ENCODE measurements at regions of chr19 and their contacts with region 1.

Region 1: DNA sequence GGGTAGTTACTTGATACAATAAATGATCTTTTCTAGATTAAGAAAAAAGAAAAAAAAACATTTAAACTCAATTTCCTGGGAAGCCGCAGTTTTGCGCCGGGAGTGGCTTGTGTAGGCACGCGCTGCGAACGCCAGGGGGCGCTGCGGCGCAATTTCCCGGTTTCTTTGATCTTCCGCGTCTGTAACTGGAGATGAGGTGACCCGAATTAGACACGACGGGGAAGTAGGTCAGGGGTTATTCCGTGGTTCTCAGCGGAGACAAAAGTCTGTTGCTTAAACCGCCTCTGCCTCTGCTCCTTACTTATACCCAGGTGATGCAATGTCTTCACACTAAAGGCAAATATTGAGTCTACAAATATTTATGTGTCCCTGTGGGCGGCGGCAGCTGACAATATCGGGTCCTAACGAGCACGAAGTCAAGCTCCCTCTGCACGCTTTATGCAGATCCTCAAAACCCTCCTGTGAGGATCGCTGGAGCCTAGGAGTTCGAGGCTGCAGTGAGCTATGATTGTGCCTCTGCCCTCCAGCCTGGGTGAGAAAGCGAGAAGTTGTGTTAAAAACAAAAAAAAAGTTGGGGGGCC is 15.2 kb downstream of the STXBP2 start:
- DNase-seq: peak; percentile 91
- ATAC-seq: peak; percentile 90
- H3K4me3 Mint-ChIP-seq: peak overlapping the region; percentile 58
- H3K27ac Mint-ChIP-seq: peak overlapping the region; percentile 66
- H3K4me1 Mint-ChIP-seq: peaks cover 22% of the 10 kb centered on the region
- H3K27me3 Mint-ChIP-seq: no peaks in the 10 kb centered on the region

Region 2: DNA sequence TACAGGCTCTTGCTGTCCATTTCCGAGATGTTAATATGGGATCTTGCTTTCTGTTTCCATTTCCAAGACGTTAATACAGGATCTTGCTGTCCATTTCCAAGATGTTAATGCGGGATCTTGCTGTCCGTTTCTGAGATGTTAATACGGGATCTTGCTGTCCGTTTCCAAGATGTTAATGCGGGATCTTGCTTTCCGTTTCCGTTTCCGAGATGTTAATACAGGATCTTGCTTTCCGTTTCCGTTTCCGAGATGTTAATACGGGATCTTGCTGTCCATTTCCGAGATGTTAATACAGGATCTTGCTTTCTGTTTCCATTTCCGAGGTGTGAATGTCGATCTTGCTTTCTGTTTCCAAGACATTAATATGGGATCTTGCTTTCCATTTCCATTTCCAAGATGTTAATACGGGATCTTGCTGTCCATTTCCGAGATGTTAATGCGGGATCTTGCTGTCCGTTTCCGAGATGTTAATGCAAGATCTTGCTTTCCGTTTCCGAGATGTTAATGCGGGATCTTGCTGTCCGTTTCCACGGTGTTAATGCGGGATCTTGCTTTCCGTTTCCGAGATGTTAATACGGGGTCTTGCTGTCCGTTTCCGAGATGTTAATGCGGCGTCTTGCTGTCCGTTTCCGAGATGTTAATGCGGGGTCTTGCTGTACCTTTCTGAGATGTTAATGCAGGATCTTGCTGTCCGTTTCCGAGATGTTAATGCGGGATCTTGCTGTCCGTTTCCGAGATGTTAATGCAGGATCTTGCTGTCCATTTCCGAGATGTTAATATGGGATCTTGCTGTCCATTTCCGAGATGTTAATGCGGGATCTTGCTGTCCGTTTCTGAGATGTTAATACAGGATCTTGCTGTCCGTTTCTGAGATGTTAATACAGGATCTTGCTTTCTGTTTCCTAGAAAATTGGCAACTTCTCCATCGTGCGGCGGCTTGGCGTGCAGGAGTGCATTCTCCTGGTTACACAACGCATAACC is 201.6 kb before region 1 on chr19:
- CTCF ChIA-PET with region 1: no interaction called
- POLR2A ChIA-PET with region 1: no interaction called
- DNase-seq: no peak
- ATAC-seq: no peak
- H3K4me3 Mint-ChIP-seq: no peak overlapping the region
- H3K27ac Mint-ChIP-seq: no peak overlapping the region
- H3K4me1 Mint-ChIP-seq: no peaks in the 10 kb centered on the region
- H3K27me3 Mint-ChIP-seq: no peaks in the 10 kb centered on the region

Region 3: DNA sequence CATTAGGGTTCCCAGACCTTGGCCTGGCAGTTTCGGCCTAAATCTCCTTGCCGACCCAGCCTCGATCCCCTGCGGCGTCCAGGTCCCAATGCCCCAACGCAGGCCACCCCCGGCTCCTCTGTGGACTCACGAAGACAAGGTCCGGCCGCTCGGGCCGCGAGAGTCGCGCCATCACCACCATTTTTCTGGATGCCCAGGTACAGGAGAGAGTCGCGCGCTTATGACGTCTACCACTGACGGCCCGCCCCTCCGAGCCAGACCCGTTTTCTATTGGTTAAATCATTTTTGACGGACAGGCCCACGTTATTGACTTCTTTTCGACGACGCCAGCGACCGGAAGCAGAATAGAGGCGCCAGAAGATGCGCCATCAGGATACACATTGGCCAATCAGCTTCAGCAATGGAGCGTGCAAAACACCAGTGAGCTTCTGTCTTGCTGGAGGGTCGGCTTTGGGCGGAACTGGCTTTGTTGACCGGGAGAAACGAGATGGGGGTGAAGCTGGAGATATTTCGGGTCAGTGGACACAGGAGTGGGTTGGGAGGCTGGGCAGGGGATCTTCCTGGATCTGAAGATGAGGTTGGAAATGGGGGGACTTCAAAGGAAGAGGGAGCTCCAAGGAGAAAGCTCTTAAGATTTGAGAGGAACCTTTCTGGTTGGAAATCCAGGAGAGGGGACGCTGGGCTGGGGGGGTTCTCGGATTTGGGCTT is 22.6 kb before region 1 on chr19 and contains the starts of genes PET100 and XAB2:
- CTCF ChIA-PET with region 1: interaction called, 13 read pairs
- POLR2A ChIA-PET with region 1: interaction called, 12 read pairs
- DNase-seq: peak; percentile 97
- ATAC-seq: peak; percentile 99
- H3K4me3 Mint-ChIP-seq: peak within 1 kb of the TSS; percentile 94
- H3K27ac Mint-ChIP-seq: peak within 1 kb of the TSS; percentile 98
- H3K4me1 Mint-ChIP-seq: peaks cover 35% of the 10 kb centered on the region
- H3K27me3 Mint-ChIP-seq: no peaks in the 10 kb centered on the region
- total RNA-seq, gene PET100: 125 to 136 TPM
- total RNA-seq, gene XAB2: 44.8 to 46.9 TPM

Region 4: GRCh38 chr19:7636691-7637373 is 15.3 kb before region 1 on chr19 and contains the start of gene STXBP2:
- CTCF ChIA-PET with region 1: interaction called, 15 read pairs
- POLR2A ChIA-PET with region 1: interaction called, 4 read pairs
- DNase-seq: peak; percentile 94
- ATAC-seq: peak; percentile 93
- H3K4me3 Mint-ChIP-seq: peak within 1 kb of the TSS; percentile 80
- H3K27ac Mint-ChIP-seq: peak within 1 kb of the TSS; percentile 92
- H3K4me1 Mint-ChIP-seq: peaks cover 40% of the 10 kb centered on the region
- H3K27me3 Mint-ChIP-seq: no peaks in the 10 kb centered on the region
- total RNA-seq, gene STXBP2: 162 to 168 TPM